Mammary epithelial cell (primary cell): ENCODE measurements at regions of chr15 and their contacts with region 1.

Region 1: GRCh38 chr15:94119923-94120775 is 111.2 kb upstream of the MCTP2 start:
- DNase-seq: peak; percentile 75
- H3K4me3 ChIP-seq: no peak overlapping the region
- H3K27ac ChIP-seq: no peak overlapping the region
- H3K4me1 ChIP-seq: no peaks in the 10 kb centered on the region
- H3K27me3 ChIP-seq: no peaks in the 10 kb centered on the region
- CTCF ChIP-seq: peak; percentile 97 to 99

Region 2: GRCh38 chr15:92797168-92797951 is 1322.8 kb before region 1 on chr15:
- CTCF ChIA-PET with region 1: no interaction called
- dilution Hi-C with region 1: no loop called
- in situ Hi-C with region 1: no loop called
- intact Hi-C with region 1: loop called (anchors 10 kb)
- DNase-seq: peak; percentile 66
- H3K4me3 ChIP-seq: no peak overlapping the region
- H3K27ac ChIP-seq: peak overlapping the region; percentile 35
- H3K4me1 ChIP-seq: peaks cover 17% of the 10 kb centered on the region
- H3K27me3 ChIP-seq: no peaks in the 10 kb centered on the region
- CTCF ChIP-seq: peak; percentile 58 to 65

Region 3: DNA sequence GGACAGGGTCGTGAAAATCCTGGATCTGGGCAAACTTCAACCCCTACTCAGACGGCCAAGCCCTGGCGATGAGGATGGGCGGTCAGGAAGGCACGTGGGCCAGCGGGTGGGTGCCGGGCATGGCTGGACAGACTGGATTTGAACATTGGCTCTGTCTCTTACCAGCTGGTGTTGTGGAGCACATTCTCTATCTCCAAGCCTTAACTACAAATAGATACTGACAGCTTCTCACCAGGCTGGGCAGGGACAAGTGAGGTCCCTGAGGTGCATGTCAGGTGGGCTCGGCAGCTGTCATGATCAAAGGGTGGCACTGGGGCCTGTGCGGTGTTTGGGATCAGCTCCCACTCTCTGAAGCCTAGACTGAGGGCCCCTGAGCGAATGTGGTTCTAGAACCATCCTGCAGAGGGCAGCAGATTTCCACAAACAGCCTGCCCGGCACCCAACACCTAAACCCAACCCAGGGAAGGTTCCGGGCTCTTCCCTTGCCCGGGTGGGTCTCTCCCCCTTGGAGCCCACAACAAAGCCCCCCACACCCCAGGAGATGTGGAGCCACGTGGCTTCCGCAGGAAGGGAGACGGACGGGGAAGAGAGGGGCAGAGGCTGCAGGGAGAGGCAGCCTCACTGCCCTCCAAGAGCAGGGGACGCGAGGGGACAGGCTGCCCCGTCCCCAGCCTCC is 1089.6 kb before region 1 on chr15:
- CTCF ChIA-PET with region 1: interaction called, 12 read pairs
- dilution Hi-C with region 1: no loop called
- in situ Hi-C with region 1: loop called (anchors 5 to 10 kb)
- intact Hi-C with region 1: loop called (anchors 1 kb)
- DNase-seq: peak; percentile 62
- H3K4me3 ChIP-seq: no peak overlapping the region
- H3K27ac ChIP-seq: no peak overlapping the region
- H3K4me1 ChIP-seq: peaks cover 33% of the 10 kb centered on the region
- H3K27me3 ChIP-seq: no peaks in the 10 kb centered on the region
- CTCF ChIP-seq: peak; percentile 87 to 88

Region 4: GRCh38 chr15:93035953-93036800 is 1084.0 kb before region 1 on chr15:
- CTCF ChIA-PET with region 1: interaction called, 15 read pairs
- dilution Hi-C with region 1: no loop called
- in situ Hi-C with region 1: loop called (anchors 5 to 10 kb)
- intact Hi-C with region 1: loop called (anchors 1 kb)
- DNase-seq: no peak
- H3K4me3 ChIP-seq: no peak overlapping the region
- H3K27ac ChIP-seq: no peak overlapping the region
- H3K4me1 ChIP-seq: peaks cover 3% of the 10 kb centered on the region
- H3K27me3 ChIP-seq: no peaks in the 10 kb centered on the region
- CTCF ChIP-seq: peak; percentile 19 to 39

Region 5: DNA sequence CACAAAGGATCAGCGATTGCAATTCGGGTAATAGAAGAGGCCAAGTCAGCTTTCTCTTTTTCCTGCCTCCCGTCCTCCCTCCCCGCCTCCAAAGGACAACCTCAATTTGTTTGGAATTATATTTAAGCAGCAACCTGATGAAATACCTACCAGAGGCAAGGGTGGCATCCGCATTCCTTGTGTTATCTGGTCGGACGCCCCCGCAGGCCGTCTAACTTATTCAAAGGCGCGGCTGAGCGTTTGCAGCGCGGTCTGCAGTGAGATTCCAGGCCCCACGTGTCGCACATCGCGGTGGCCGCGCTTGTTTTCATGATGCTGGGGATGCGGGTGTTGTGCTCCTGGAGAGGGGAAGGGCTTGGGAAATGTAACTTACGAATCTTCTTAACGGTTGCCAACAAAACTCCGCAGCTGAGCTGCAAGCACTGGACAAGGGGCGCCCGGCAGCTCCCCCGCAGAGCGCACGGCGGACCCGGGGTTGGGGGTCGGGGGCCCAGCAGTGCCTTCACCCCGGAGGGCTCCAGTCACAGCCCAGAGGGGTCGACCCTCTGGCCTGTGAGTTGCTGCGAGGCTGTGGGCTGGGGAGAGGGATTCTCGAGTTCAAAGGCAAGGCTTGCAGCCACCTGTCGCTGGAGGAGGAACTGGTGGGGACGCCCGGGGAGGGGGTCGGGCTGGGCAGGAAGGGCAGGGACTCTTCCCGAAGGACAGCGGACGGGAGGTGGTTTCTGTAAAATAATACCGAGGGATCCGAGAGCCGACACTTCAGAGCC is 1010.6 kb before region 1 on chr15:
- CTCF ChIA-PET with region 1: no interaction called
- dilution Hi-C with region 1: loop called (anchors 10 kb)
- in situ Hi-C with region 1: no loop called
- intact Hi-C with region 1: no loop called
- DNase-seq: no peak
- H3K4me3 ChIP-seq: no peak overlapping the region
- H3K27ac ChIP-seq: no peak overlapping the region
- H3K4me1 ChIP-seq: no peaks in the 10 kb centered on the region
- H3K27me3 ChIP-seq: no peaks in the 10 kb centered on the region
- CTCF ChIP-seq: no peak

Region 6: DNA sequence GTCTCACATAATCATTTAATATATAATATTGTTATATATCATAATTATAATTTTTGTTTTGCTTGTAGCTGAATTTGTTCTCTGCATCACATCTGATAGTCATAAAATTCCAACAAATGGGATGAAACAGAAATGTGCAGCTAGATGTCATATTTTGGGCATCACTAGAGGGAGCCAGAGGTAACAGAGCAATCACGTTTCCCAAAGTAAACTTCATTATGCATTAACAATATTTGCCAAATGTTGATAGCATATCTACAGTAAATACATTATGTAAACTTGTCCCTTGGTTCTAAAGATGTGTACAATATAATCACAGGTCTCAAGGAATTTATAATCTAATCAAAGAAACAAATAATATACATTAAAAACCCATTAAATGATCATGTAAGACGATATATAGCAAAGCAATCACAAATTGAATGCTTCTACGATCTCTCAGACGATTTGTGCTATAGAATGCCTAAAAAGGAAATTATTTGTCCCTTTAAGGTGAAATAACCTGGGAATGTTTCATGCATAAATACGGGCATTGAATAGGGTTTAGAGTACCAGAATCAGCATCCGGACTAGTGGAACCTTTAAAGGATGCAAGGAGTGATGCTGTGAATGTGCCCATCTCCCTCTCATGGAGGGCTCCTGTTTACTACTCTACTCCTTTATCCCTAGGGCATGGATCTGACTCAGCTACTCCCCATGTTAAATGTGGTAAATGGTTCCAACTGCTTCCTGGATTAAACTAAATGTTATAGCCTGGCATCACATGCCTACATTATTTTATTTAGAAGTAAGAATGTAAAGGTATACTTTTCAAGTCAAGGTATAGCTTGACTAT is 122.8 kb before region 1 on chr15:
- CTCF ChIA-PET with region 1: interaction called, 7 read pairs
- dilution Hi-C with region 1: no loop called
- in situ Hi-C with region 1: loop called (anchors 10 kb)
- intact Hi-C with region 1: loop called (anchors 1 kb)
- DNase-seq: peak; percentile 11
- H3K4me3 ChIP-seq: no peak overlapping the region
- H3K27ac ChIP-seq: no peak overlapping the region
- H3K4me1 ChIP-seq: no peaks in the 10 kb centered on the region
- H3K27me3 ChIP-seq: peaks cover 2% of the 10 kb centered on the region
- CTCF ChIP-seq: peak; percentile 74 to 85

Region 7: GRCh38 chr15:94004697-94005096 is 115.5 kb before region 1 on chr15:
- CTCF ChIA-PET with region 1: no interaction called
- dilution Hi-C with region 1: no loop called
- in situ Hi-C with region 1: loop called (anchors 10 kb)
- intact Hi-C with region 1: loop called (anchors 2 kb)
- DNase-seq: peak; percentile 56
- H3K4me3 ChIP-seq: no peak overlapping the region
- H3K27ac ChIP-seq: no peak overlapping the region
- H3K4me1 ChIP-seq: no peaks in the 10 kb centered on the region
- H3K27me3 ChIP-seq: no peaks in the 10 kb centered on the region
- CTCF ChIP-seq: no peak

Region 8: GRCh38 chr15:94247789-94248638 is 127.9 kb after region 1 on chr15:
- CTCF ChIA-PET with region 1: no interaction called
- dilution Hi-C with region 1: no loop called
- in situ Hi-C with region 1: no loop called
- intact Hi-C with region 1: no loop called
- DNase-seq: no peak
- H3K4me3 ChIP-seq: no peak overlapping the region
- H3K27ac ChIP-seq: no peak overlapping the region
- H3K4me1 ChIP-seq: no peaks in the 10 kb centered on the region
- H3K27me3 ChIP-seq: no peaks in the 10 kb centered on the region
- CTCF ChIP-seq: no peak

Region 9: DNA sequence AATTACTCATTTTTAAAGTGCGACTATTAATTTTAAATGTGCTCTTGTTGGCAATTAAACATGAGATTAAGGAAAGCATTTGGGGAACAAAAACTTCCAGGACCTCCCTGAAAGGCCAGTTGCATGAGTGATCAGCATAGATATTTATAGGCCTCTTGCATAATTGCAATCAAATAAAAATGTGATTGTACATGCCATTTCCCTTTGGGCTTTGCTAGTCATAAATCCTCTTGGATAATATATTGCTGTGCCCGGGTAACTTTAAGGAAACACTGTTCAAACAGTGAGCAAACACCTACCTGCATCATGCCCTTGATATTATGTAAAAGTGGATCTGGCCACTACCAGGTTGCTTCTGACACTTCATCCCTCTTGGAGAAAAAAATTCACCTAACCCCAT is 350.3 kb after region 1 on chr15:
- CTCF ChIA-PET with region 1: no interaction called
- dilution Hi-C with region 1: no loop called
- in situ Hi-C with region 1: no loop called
- intact Hi-C with region 1: no loop called
- DNase-seq: peak; percentile 9
- H3K4me3 ChIP-seq: no peak overlapping the region
- H3K27ac ChIP-seq: no peak overlapping the region
- H3K4me1 ChIP-seq: no peaks in the 10 kb centered on the region
- H3K27me3 ChIP-seq: no peaks in the 10 kb centered on the region
- CTCF ChIP-seq: no peak